ENCODE measurements at regions of chr3 and their contacts with region 1.

Region 1: DNA sequence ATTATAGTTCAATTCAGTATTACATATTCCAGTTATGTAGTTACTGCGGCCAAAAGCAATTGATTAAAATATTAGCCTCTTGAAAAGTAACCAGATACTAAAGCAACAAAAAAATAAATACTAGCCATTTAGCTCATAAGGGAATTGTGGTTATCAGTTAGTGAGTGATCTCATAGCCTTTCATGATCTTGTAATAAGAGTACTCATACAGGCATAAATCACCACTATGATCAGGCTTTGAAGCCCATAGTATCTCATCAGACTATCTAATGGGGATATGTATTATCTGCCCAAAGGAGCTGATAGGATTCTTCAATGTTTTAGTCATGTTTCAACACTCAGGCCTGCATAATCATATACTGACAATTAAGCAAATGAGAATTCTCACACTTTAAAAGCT is 184.1 kb upstream of the CCDC54 start:
- DNase-seq: no peak
- H3K4me3 ChIP-seq: no peak overlapping the region
- H3K27ac ChIP-seq: no peak overlapping the region
- H3K27me3 ChIP-seq: no peaks in the 10 kb centered on the region
- CTCF ChIP-seq: no peak

Region 2: DNA sequence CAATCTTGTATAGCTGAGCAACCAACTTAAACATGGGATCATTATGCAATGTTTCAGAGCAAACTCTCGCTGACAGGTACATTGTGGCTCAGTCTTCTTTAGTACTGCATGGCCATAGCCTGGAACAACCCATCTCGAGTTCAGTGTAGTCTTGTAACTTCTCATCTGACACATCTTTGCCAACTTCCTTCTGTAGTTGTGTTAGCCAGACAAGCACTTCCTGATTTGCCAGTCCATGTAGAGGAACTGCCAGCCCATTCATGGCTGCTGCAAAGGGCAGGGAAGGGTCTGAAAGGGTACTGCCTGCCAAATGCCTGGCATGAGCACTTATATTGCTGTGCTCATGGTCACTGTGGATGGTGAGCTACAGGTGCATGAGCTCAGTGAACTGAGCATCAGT is 135.0 kb after region 1 on chr3:
- CTCF ChIA-PET with region 1: interaction called, 11 read pairs
- POLR2A ChIA-PET with region 1: no interaction called
- DNase-seq: no peak
- H3K4me3 ChIP-seq: no peak overlapping the region
- H3K27ac ChIP-seq: no peak overlapping the region
- H3K27me3 ChIP-seq: peaks cover 2% of the 10 kb centered on the region
- CTCF ChIP-seq: no peak

Measured in AG04450 (cell line).